ENCODE measurements at regions of chr6 and their contacts with region 1.

Region 1: DNA sequence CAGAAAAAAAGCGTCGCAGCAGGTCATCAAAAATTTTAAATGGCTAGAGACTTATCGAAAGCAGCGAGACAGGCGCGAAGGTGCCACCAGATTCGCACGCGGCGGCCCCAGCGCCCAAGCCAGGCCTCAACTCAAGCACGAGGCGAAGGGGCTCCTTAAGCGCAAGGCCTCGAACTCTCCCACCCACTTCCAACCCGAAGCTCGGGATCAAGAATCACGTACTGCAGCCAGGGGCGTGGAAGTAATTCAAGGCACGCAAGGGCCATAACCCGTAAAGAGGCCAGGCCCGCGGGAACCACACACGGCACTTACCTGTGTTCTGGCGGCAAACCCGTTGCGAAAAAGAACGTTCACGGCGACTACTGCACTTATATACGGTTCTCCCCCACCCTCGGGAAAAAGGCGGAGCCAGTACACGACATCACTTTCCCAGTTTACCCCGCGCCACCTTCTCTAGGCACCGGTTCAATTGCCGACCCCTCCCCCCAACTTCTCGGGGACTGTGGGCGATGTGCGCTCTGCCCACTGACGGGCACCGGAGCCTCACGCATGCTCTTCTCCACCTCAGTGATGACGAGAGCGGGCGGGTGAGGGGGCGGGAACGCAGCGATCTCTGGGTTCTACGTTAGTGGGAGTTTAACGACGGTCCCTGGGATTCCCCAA is at the start of gene EEF1A1:
- DNase-seq: peak; percentile 100
- ATAC-seq: peak; percentile 78
- H3K4me3 Mint-ChIP-seq: peak within 1 kb of the TSS; percentile 97
- H3K27ac Mint-ChIP-seq: peak within 1 kb of the TSS; percentile 100
- H3K4me1 Mint-ChIP-seq: peaks cover 25% of the 10 kb centered on the region
- H3K27me3 Mint-ChIP-seq: peaks cover 2% of the 10 kb centered on the region
- CTCF ChIP-seq: no peak
- total RNA-seq, gene EEF1A1: 15,479 to 15,634 TPM

Region 2: GRCh38 chr6:73461537-73462350 is 59.1 kb before region 1 on chr6 and contains the start of gene MTO1:
- CTCF ChIA-PET with region 1: interaction called, 6 read pairs
- POLR2A ChIA-PET with region 1: interaction called, 73 read pairs
- intact Hi-C with region 1: no loop called
- DNase-seq: peak; percentile 94
- ATAC-seq: peak; percentile 93
- H3K4me3 Mint-ChIP-seq: peak within 1 kb of the TSS; percentile 91
- H3K27ac Mint-ChIP-seq: peak within 1 kb of the TSS; percentile 99
- H3K4me1 Mint-ChIP-seq: peaks cover 38% of the 10 kb centered on the region
- H3K27me3 Mint-ChIP-seq: no peaks in the 10 kb centered on the region
- CTCF ChIP-seq: no peak
- total RNA-seq, gene MTO1: 42.1 to 43.2 TPM

Region 3: DNA sequence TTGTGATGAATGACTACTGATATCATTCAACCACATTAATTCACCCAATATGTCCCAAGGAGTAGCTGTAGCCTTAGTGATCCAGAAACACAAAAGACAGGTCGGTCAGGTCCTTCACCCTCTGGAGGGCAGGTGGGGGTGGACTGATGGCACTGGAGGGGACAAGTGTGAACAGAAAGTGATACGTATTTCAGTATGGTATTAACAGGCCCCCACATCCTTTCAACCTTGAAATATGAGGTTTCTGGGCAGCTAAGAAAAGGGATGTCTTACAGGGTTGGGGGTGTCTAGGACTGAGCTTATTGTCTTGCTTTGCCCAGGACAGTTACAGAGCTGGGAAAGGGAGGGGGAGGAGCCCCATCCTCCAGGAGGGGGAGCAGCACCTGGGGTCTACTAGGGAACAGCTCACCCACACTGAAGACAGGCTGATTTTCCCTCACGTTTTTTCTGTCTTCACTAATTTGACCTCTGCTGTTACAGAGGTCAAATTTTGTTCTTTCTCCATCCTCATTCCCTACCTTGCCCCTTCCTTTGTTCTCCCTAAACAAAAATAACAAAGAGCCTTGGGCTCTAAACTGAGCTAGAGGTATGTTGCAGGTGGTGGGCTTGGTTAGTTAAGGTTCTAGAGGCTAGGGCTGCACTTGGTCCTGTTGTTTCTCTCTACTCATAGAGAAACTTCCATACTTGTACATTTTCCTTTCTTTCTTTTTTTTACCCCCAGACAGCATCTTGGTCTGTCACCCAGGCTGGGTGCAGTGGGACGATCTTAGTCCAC is 38.0 kb after region 1 on chr6:
- CTCF ChIA-PET with region 1: no interaction called
- POLR2A ChIA-PET with region 1: interaction called, 19 read pairs
- intact Hi-C with region 1: no loop called
- DNase-seq: no peak
- ATAC-seq: peak; percentile 42
- H3K4me3 Mint-ChIP-seq: no peak overlapping the region
- H3K27ac Mint-ChIP-seq: no peak overlapping the region
- H3K4me1 Mint-ChIP-seq: peaks cover 20% of the 10 kb centered on the region
- H3K27me3 Mint-ChIP-seq: no peaks in the 10 kb centered on the region
- CTCF ChIP-seq: no peak

Region 4: DNA sequence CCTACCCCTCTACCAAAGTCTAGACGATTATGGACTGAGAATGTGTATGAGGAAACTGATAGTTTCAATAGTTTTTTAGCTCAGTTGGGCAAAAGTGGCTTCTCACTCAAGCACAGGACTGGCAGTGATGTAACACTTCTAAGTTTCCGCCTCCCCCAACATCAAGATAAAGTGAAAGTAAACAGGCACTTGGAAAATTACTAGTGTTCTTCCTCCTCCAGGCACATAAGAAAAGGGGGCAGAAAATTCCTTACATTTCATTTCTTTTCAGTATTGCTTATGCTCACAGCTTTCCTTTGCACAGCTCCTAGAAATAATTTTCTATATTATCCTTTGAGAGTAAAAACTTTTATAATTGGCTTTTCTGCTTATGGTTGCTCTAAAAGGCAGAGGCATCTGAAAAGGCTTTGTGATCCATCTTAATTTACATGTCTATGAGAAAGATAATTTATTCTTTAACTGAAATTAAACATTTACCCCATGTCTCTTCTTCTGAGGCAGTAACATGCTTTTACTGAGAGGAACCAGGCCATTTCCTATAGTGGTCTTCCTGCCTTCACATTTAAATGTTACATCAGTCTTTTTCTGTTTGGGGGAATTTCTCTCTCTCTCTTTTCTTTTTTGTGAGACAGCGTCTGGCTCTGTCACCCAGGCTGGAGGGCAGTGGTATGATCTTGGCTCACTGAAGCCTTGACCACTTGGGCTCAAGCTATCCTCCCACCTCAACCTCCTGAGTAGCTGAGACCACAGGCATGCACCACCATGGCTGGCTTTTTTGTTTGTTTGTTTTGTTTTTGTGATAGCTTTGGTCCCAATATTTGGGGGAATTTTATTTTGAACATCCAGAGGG is 65.0 kb after region 1 on chr6:
- CTCF ChIA-PET with region 1: interaction called, 18 read pairs
- POLR2A ChIA-PET with region 1: interaction called, 159 read pairs
- intact Hi-C with region 1: loop called (anchors 2 kb)
- DNase-seq: peak; percentile 69
- ATAC-seq: peak; percentile 77
- H3K4me3 Mint-ChIP-seq: peak overlapping the region; percentile 90
- H3K27ac Mint-ChIP-seq: peak overlapping the region; percentile 100
- H3K4me1 Mint-ChIP-seq: peaks cover 29% of the 10 kb centered on the region
- H3K27me3 Mint-ChIP-seq: no peaks in the 10 kb centered on the region
- CTCF ChIP-seq: no peak

Region 5: GRCh38 chr6:73653571-73654424 is 133.0 kb after region 1 on chr6 and contains the start of gene SLC17A5:
- CTCF ChIA-PET with region 1: interaction called, 13 read pairs
- POLR2A ChIA-PET with region 1: interaction called, 78 read pairs
- intact Hi-C with region 1: loop called (anchors 5 kb)
- DNase-seq: peak; percentile 92
- ATAC-seq: peak; percentile 89
- H3K4me3 Mint-ChIP-seq: peak within 1 kb of the TSS; percentile 87
- H3K27ac Mint-ChIP-seq: peak within 1 kb of the TSS; percentile 92
- H3K4me1 Mint-ChIP-seq: peaks cover 31% of the 10 kb centered on the region
- H3K27me3 Mint-ChIP-seq: no peaks in the 10 kb centered on the region
- CTCF ChIP-seq: no peak
- total RNA-seq, gene SLC17A5: 4.2 to 5.0 TPM